Posterior vena cava (tissue), 2 donors: ENCODE measurements at regions of chr20 and their contacts with region 1.

Region 1: DNA sequence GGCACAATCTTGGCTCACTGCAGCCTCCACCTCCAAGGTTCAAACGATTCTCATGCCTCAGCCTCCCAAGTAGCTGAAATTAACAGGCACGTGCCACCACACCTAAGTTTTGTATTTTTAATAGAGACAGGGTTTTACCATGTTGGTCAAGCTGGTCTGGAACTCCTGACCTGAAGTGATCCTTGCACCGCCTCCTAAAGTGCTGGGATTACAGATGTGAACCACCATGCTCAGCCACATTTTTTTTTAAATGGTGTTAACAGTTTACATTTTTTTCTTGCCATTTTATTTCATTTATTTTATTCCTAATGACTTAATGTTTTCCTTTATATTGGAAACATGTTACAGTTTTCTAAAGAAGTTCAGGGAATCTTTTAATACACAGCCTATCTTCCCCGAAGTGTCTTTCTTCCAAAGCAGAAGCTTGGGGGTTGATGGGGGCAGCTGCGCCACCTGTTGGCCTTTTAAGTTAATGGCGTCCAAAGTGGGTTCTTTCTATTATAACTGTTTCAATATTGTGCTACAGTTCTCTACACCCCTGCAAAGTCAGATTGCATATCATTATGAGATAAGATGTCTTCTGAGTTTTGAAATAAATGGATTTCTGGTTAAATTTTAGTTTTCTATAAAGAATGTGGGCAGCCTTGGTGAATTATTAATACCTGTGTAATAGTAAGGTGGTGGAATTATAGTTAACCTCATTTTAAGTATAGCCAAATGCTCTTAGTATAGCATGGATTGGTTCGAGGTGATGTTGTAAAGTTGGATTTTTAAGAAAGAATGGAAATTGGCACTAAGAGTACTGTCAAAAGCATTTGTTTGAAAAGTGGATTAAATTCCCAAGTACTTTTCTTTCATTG is 42.0 kb upstream of the PLCG1 start:
- DNase-seq: peak; percentile 85

Region 2: DNA sequence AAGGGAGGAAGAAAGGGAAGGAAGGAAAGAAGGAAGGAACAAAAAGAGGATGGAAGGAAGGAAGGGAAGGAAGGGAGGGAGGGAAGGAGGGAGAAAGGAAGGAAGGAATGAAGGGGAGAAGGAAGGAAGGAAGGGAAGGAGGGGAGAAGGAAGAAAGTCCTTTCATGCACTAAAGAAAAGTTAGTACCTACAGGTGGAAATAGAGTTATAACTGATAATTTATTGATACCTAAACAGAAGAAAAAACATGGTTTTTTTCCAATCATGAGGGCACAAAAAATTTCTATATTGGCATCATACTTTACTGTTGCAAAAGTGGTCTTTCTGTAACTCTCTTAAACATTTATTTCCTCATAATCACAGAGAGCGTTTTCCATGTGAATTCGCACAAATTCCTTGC is 1065.8 kb before region 1 on chr20:
- intact Hi-C with region 1: loop called in 1 of 2 experiments (anchors 5 kb)
- DNase-seq: no peak

Region 3: DNA sequence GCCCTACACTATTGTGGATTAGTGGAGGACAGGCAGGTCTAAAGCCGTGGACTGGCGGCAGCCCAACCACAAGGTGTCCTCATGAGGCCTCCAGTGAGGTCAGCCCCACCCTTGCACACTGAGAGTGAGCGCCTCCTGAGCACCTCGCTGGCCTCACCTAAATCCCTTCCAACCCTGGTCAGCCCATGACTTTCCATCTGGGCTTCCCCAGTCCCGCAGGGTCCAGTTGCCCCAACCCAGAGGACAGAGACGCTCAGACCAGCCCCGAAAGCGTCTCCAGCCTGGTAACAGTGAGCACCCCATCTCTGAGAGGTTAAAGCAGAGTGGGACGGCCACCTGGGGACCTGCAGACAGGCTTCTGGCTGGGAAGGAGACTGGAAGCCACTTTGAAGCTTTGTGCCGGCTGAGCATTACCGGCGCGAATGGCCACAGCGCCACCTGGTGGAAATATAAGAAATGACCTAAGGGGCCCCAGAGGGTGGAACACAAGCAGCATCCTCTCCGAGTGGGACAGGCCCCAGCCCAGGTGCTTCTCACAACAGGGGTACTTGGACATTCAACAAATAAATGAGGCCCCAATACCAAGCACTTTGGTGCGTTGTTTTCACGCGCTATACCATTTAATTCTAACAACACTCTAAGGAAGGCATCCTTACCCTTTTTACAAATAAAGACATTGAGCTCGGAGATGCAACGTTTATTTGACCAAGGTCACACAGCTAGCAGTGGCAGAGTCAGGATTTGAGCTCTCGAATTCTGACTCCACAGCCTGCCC is 132.4 kb before region 1 on chr20:
- intact Hi-C with region 1: loop called in 1 of 2 experiments (anchors 2 kb)
- DNase-seq: peak; percentile 88

Region 4: GRCh38 chr20:40990542-40991120 is 104.7 kb before region 1 on chr20:
- intact Hi-C with region 1: loop called (anchors 5 kb)
- DNase-seq: peak; percentile 91